ENCODE measurements at regions of chr16 and their contacts with region 1.

Region 1: DNA sequence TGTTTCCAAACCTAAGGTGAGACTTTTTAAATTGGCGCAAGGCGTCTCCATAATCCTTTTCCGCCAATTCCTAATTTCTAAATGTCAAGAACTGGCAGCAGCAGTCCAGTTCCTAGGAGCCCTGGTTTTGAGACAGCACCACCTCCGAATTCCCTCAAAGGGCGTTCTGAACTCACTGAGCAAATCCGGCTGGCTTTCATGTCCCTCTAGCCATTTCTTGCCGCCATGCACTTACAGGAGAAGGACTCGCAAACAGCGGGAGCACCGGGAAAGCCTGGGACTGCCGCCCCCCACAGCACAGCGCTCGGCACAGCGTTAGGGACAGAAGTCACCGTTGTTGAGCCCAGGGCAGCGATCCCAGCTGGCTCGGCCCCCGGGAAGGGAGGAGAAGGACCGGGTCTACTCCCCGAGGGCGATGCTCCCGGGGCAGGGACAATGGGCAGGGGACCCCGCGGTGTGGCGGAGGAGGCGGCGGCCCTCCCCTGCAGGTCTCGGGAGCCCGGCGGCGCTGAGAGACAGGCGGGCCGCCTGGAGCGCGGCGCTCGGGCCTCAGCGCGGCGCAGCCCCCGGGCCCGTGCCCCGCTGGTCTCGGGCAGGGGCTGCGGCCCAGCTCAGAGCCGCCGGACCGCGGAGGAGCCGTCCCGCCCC is 545 bp downstream of the ARHGAP17 start:
- DNase-seq: no peak
- H3K4me3 Mint-ChIP-seq: peak overlapping the region; percentile 94
- H3K27ac Mint-ChIP-seq: peak overlapping the region; percentile 89
- H3K4me1 Mint-ChIP-seq: peaks cover 73% of the 10 kb centered on the region
- H3K27me3 Mint-ChIP-seq: no peaks in the 10 kb centered on the region

Region 2: GRCh38 chr16:24668481-24669061 is 346.1 kb before region 1 on chr16:
- intact Hi-C with region 1: loop called (anchors 5 kb)
- DNase-seq: no peak
- H3K4me3 Mint-ChIP-seq: peak overlapping the region; percentile 66
- H3K27ac Mint-ChIP-seq: peak overlapping the region; percentile 95
- H3K4me1 Mint-ChIP-seq: peaks cover 27% of the 10 kb centered on the region
- H3K27me3 Mint-ChIP-seq: peaks cover 2% of the 10 kb centered on the region

Region 3: GRCh38 chr16:24975428-24975889 is 39.2 kb before region 1 on chr16:
- intact Hi-C with region 1: loop called (anchors 2 kb)
- DNase-seq: no peak
- H3K4me3 Mint-ChIP-seq: no peak overlapping the region
- H3K27ac Mint-ChIP-seq: peak overlapping the region; percentile 7
- H3K4me1 Mint-ChIP-seq: peaks cover 44% of the 10 kb centered on the region
- H3K27me3 Mint-ChIP-seq: no peaks in the 10 kb centered on the region

Region 4: GRCh38 chr16:25031441-25032307 is 17.1 kb after region 1 on chr16:
- intact Hi-C with region 1: loop called (anchors 1 kb)
- DNase-seq: peak; percentile 88
- H3K4me3 Mint-ChIP-seq: peak overlapping the region; percentile 85
- H3K27ac Mint-ChIP-seq: peak overlapping the region; percentile 98
- H3K4me1 Mint-ChIP-seq: peaks cover 43% of the 10 kb centered on the region
- H3K27me3 Mint-ChIP-seq: peaks cover under 1% of the 10 kb centered on the region

Region 5: DNA sequence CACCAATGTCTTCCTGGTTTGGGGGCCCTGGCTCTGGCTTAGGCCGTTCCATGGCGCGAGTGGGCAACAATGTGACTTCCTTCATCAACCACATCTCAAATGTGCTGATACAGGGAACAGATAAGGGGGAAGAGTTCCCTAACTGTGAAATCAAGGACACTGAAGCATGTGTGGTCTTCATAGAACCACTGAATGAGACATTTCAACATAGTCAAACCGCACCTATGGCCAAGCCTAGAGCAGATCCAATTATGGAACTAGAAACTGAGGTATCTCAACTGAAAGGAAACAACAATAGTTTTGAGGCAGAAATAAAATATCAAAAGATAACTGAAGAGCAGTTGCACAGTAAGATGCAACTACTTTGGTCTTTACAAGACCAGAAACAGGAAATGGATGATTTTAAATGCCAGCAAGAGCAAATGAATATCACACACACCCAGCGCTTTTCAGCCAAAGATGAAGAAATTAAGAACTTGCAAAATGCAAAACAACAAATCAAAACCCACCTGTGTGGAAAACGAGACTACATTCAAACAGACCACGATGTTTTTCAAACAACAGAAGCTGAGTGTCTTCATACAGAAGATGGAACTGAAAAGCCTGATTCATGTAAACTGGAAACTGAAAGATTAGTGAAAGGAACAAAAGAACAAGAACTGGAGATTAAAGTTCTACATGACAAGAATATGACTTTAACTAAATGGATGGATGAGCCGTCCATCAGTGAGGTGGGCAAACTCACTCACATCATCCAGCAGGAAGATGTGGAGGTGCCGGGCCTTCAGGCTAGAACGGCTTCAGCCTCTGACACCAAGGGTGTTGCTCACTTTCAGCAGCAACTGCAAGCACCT is 78.8 kb after region 1 on chr16:
- intact Hi-C with region 1: loop called (anchors 1 kb)
- DNase-seq: no peak
- H3K4me3 Mint-ChIP-seq: peak overlapping the region; percentile 56
- H3K27ac Mint-ChIP-seq: peak overlapping the region; percentile 77
- H3K4me1 Mint-ChIP-seq: peaks cover 25% of the 10 kb centered on the region
- H3K27me3 Mint-ChIP-seq: peaks cover 4% of the 10 kb centered on the region

Region 6: GRCh38 chr16:25257504-25257955 is 242.9 kb after region 1 on chr16 and contains the start of gene ZKSCAN2:
- intact Hi-C with region 1: loop called (anchors 2 kb)
- DNase-seq: peak; percentile 83
- H3K4me3 Mint-ChIP-seq: peak within 1 kb of the TSS; percentile 91
- H3K27ac Mint-ChIP-seq: peak within 1 kb of the TSS; percentile 97
- H3K4me1 Mint-ChIP-seq: peaks cover 53% of the 10 kb centered on the region
- H3K27me3 Mint-ChIP-seq: peaks cover 2% of the 10 kb centered on the region
- total RNA-seq, gene ZKSCAN2: 6.1 and 6.4 TPM in 2 replicates